OCI-LY7 (cell line): ENCODE measurements at regions of chr12 and their contacts with region 1.

Region 1: GRCh38 chr12:125183187-125184067 is 118.2 kb downstream of the AACS start:
- DNase-seq: peak; percentile 83
- H3K4me3 ChIP-seq: peak overlapping the region; percentile 15
- H3K27ac ChIP-seq: no peak overlapping the region
- H3K4me1 ChIP-seq: peaks cover 48% of the 10 kb centered on the region
- CTCF ChIP-seq: peak; percentile 95

Region 2: DNA sequence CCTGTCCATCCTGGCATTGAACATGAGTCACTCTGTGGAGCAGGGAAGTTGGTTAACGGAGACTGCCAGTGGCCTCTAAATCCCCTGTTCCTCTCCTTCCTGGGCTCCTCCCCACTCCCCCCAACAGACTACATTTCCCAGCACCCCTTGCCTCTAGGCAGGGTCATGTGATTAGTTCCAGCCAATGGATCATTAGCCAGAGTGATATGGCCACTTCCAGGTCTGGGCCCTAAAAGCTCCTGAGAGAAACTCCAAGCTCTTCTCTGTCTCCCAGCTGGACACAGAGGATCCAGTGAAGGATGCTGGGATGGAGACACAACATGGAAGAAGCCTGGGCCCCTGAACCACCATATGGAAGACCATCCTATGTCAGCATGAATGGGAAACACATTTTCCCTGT is 942.9 kb before region 1 on chr12:
- CTCF ChIA-PET with region 1: no interaction called
- POLR2A ChIA-PET with region 1: no interaction called
- intact Hi-C with region 1: no loop called
- DNase-seq: peak; percentile 55
- H3K4me3 ChIP-seq: no peak overlapping the region
- H3K27ac ChIP-seq: no peak overlapping the region
- H3K4me1 ChIP-seq: no peaks in the 10 kb centered on the region
- CTCF ChIP-seq: no peak

Region 3: DNA sequence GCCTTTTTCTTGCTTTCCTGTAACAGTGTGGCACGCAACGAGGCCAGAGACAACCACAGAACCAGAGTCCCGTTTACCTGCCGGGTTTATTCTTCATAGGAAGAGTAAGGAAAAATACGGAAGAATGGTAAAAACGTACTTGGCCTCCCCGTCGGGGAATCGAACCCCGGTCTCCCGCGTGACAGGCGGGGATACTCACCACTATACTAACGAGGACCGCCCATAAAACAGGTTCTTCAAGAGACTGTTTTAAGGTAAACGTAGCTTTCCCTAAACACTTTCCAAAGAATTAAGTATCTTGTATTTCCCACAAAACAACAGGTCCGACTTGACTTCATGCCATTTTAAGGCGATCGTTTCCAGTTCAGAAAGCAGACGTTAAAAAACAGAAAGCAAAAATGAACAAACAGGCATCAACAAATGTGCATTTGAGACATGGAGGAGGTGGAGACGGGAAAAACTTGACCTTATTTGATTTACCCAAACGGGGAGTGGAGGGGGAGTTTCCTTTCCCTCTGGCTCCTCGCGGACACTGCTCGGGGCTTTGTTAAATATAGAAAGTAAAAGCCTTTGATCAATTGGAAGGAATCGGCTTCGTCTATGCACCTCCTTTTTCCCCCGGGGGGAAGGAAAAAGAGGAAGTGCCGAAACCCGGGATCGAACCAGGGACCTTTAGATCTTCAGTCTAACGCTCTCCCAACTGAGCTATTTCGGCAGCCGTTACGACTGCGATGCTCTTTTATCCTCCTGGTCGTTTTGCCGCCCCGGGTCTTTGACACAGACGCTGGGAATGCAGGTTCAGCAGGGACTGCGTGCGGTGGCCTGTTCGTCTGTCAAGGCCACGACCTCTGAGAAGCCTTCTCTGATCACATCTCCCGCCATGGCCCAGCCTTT is 256.0 kb before region 1 on chr12:
- CTCF ChIA-PET with region 1: no interaction called
- POLR2A ChIA-PET with region 1: no interaction called
- intact Hi-C with region 1: loop called (anchors 5 kb)
- DNase-seq: peak; percentile 85
- H3K4me3 ChIP-seq: peak overlapping the region; percentile 81
- H3K27ac ChIP-seq: peak overlapping the region; percentile 66
- H3K4me1 ChIP-seq: peaks cover 19% of the 10 kb centered on the region
- CTCF ChIP-seq: no peak

Region 4: DNA sequence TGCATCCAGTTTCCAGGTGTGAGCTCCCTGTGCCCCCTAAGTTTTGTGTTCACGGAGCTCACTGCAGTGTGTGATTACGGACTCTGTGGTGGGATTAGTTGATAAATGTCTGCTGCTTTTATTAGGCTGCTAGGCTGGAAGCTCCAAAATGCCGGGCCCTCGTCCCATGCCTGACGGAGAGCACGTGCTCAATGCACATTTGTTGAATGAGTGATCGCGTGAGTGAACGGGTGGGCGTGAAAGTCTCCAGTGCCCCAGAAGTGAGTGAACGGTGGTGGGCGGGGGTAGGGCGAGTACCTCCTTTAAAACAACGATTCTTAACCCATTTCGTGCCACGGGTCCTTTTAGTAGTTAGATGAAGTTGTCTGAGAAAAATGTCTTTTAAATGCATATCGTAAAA is 57.3 kb after region 1 on chr12:
- CTCF ChIA-PET with region 1: no interaction called
- POLR2A ChIA-PET with region 1: no interaction called
- intact Hi-C with region 1: loop called (anchors 1 kb)
- DNase-seq: no peak
- H3K4me3 ChIP-seq: no peak overlapping the region
- H3K27ac ChIP-seq: no peak overlapping the region
- H3K4me1 ChIP-seq: no peaks in the 10 kb centered on the region
- CTCF ChIP-seq: no peak

Region 5: GRCh38 chr12:125402874-125403789 is 219.7 kb after region 1 on chr12:
- CTCF ChIA-PET with region 1: interaction called, 4 read pairs
- POLR2A ChIA-PET with region 1: interaction called, 3 read pairs
- intact Hi-C with region 1: loop called (anchors 1 kb)
- DNase-seq: peak; percentile 81
- H3K4me3 ChIP-seq: no peak overlapping the region
- H3K27ac ChIP-seq: no peak overlapping the region
- H3K4me1 ChIP-seq: peaks cover 44% of the 10 kb centered on the region
- CTCF ChIP-seq: peak; percentile 95

Region 6: DNA sequence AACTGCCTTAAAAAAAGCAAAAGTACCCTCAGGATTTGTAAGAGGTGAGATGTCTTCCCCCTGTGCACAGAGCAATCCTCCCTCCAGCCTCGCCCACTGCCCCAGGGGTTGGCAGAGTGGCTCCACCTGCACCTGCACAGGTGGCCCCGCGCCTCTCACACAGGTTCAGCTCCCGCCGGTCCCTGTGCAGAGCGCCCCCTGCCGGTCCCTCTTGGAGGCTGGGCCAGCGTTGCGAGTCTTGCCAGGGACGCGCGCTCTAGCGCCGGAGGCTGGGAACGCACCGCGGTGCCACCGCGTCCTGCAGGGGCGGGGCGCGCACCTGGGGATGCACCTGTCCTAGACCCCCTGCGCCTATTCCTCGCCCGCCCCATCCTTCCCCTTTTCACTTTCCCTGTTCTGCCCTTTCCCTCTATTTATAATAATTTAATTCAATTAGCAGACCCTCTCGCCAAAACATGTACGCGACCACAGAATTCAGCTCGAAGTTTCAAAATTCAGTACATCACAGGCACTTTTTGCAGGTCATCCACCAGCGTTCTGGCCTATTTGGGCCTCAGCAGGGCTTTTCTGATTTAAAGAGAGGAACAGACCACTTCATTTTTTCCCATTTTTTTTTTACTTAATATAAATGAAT is 500.4 kb after region 1 on chr12:
- CTCF ChIA-PET with region 1: no interaction called
- POLR2A ChIA-PET with region 1: no interaction called
- intact Hi-C with region 1: loop called (anchors 2 kb)
- DNase-seq: peak; percentile 61
- H3K4me3 ChIP-seq: no peak overlapping the region
- H3K27ac ChIP-seq: no peak overlapping the region
- H3K4me1 ChIP-seq: no peaks in the 10 kb centered on the region
- CTCF ChIP-seq: peak; percentile 80